Activated CD8-positive, alpha-beta T cell treated with anti-CD3 and anti-CD28 coated beads for 36 hours (primary cell): ENCODE measurements at regions of chr5 and their contacts with region 1.

Region 1: GRCh38 chr5:126499853-126500342 is 76.7 kb downstream of the GRAMD2B start:
- DNase-seq: peak; percentile 29
- ATAC-seq: peak; percentile 81
- H3K4me3 Mint-ChIP-seq: no peak overlapping the region
- H3K27ac Mint-ChIP-seq: no peak overlapping the region
- H3K4me1 Mint-ChIP-seq: peaks cover 22% of the 10 kb centered on the region
- H3K27me3 Mint-ChIP-seq: no peaks in the 10 kb centered on the region
- CTCF ChIP-seq: peak; percentile 69

Region 2: DNA sequence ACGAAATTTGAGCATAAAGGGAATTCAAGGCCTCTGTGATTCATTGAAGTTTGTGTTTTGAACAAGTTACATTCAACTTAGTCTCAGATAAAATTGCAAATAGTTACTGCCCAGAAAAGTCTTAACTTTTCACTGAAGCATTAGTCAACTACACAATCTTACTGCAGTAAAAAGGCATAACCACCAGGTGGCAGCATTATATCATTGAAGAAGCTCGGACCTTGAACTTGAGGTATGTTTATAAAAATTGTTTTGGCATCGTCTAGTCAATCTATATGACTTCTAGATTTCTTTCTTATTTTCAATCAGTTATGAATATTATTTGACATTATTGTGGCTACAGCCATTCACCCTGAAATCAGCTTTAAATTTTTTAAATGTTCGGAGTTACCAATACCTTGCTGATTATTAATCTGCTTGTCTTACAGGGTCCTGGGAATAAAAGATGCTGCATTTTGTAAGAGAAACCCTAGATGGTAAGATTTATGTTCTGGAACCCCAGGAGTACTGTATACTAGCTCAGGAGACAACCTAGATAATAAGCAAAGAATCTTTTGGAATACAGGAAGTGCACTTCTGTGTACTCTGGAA is 160.6 kb before region 1 on chr5:
- CTCF ChIA-PET with region 1: interaction called, 38 read pairs
- POLR2A ChIA-PET with region 1: no interaction called
- intact Hi-C with region 1: no loop called
- DNase-seq: peak; percentile 55
- ATAC-seq: no peak
- H3K4me3 Mint-ChIP-seq: no peak overlapping the region
- H3K27ac Mint-ChIP-seq: no peak overlapping the region
- H3K4me1 Mint-ChIP-seq: no peaks in the 10 kb centered on the region
- H3K27me3 Mint-ChIP-seq: no peaks in the 10 kb centered on the region
- CTCF ChIP-seq: peak; percentile 90

Region 3: GRCh38 chr5:126384985-126385384 is 114.9 kb before region 1 on chr5:
- CTCF ChIA-PET with region 1: interaction called, 16 read pairs
- POLR2A ChIA-PET with region 1: no interaction called
- intact Hi-C with region 1: no loop called
- DNase-seq: no peak
- ATAC-seq: no peak
- H3K4me3 Mint-ChIP-seq: no peak overlapping the region
- H3K27ac Mint-ChIP-seq: no peak overlapping the region
- H3K4me1 Mint-ChIP-seq: no peaks in the 10 kb centered on the region
- H3K27me3 Mint-ChIP-seq: no peaks in the 10 kb centered on the region
- CTCF ChIP-seq: no peak

Region 4: GRCh38 chr5:126483156-126483555 is 16.7 kb before region 1 on chr5:
- CTCF ChIA-PET with region 1: interaction called, 12 read pairs
- POLR2A ChIA-PET with region 1: no interaction called
- intact Hi-C with region 1: no loop called
- DNase-seq: no peak
- ATAC-seq: no peak
- H3K4me3 Mint-ChIP-seq: no peak overlapping the region
- H3K27ac Mint-ChIP-seq: no peak overlapping the region
- H3K4me1 Mint-ChIP-seq: no peaks in the 10 kb centered on the region
- H3K27me3 Mint-ChIP-seq: no peaks in the 10 kb centered on the region
- CTCF ChIP-seq: no peak

Region 5: DNA sequence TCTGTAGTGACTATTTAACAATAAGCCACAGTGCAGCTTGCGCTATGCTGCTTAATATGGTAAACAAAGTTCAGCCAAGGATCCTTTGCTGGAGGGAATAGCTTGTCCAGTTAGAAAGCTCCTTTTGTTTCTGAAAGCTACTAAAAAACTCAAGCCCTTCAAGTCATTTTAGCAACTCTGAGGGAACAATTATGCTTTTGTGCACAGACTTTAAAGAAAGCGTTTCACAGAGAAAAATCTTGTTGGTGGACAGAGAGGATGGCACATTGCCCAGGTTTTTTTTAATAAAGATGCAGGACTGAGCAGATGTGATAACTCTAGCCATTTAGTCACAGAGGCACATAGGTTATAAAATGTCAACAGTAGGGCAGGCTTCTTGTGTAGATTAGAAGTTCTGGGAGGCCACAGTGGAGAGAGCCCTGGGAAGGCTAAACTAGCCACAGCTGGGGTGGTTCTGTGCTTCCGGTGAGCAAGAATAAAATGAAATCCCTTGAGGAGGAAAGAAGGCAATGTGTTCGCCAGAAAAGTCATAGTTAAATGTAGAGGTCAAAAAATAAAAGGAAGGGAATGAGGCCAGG is 31.7 kb after region 1 on chr5:
- CTCF ChIA-PET with region 1: interaction called, 28 read pairs
- POLR2A ChIA-PET with region 1: no interaction called
- intact Hi-C with region 1: no loop called
- DNase-seq: no peak
- ATAC-seq: no peak
- H3K4me3 Mint-ChIP-seq: no peak overlapping the region
- H3K27ac Mint-ChIP-seq: no peak overlapping the region
- H3K4me1 Mint-ChIP-seq: no peaks in the 10 kb centered on the region
- H3K27me3 Mint-ChIP-seq: no peaks in the 10 kb centered on the region
- CTCF ChIP-seq: no peak